Activated naive CD4-positive, alpha-beta T cell treated with anti-CD3 and anti-CD28 coated beads for 36 hours (primary cell): ENCODE measurements at regions of chr1 and their contacts with region 1.

Region 1: GRCh38 chr1:51569284-51570062 is 47.4 kb upstream of the OSBPL9 start:
- DNase-seq: peak; percentile 68
- H3K4me3 Mint-ChIP-seq: peak overlapping the region; percentile 13
- H3K27ac Mint-ChIP-seq: peak overlapping the region; percentile 91
- H3K4me1 Mint-ChIP-seq: peaks cover 31% of the 10 kb centered on the region
- H3K27me3 Mint-ChIP-seq: no peaks in the 10 kb centered on the region

Region 2: GRCh38 chr1:51541313-51542174 is 27.9 kb before region 1 on chr1:
- CTCF ChIA-PET with region 1: no interaction called
- intact Hi-C with region 1: loop called (anchors 1 kb)
- DNase-seq: peak; percentile 26
- H3K4me3 Mint-ChIP-seq: no peak overlapping the region
- H3K27ac Mint-ChIP-seq: no peak overlapping the region
- H3K4me1 Mint-ChIP-seq: peaks cover 17% of the 10 kb centered on the region
- H3K27me3 Mint-ChIP-seq: no peaks in the 10 kb centered on the region

Region 3: DNA sequence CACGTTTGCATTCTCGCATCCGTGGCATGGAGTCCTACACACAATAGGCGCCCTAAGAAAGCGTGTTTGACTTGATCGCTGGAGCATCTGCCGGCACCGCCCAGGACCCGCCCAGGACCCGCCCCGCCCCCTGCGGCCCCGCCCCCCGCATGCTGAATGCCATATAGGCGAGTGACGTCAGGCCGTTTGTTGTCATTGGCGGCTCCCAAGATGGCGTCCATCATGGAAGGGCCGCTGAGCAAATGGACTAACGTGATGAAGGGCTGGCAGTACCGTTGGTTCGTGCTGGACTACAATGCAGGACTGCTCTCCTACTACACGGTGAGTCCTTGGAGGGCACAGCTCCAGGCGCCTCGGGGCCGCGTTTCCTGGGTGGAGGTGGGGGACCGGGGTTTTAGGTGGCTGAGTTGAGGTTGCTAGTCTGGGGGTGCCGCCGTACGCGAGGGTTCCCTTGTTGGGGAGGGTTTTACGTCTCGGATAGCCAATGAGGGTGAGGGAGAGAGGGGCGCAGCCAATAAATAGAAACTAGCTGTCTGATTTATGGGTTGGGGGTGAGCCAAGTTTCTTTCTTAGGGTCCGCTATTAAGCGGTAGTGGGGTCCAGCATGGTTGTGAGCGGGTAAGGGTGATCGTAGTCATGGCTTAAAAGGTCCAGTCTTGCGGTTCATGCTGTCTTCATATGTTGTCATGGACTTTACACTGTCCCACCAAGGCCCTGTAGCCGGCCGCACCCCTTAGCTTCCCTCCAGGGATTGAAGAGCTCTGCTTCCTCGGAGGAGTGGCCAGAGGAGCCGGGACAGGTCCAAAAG is 47.6 kb after region 1 on chr1 and contains the start of gene OSBPL9:
- CTCF ChIA-PET with region 1: interaction called, 3 read pairs
- intact Hi-C with region 1: loop called (anchors 1 kb)
- DNase-seq: peak; percentile 94
- H3K4me3 Mint-ChIP-seq: peak within 1 kb of the TSS; percentile 98
- H3K27ac Mint-ChIP-seq: peak within 1 kb of the TSS; percentile 89
- H3K4me1 Mint-ChIP-seq: peaks cover 25% of the 10 kb centered on the region
- H3K27me3 Mint-ChIP-seq: no peaks in the 10 kb centered on the region
- total RNA-seq, gene OSBPL9: 38.2 to 40.7 TPM

Region 4: GRCh38 chr1:51729156-51729823 is 159.8 kb after region 1 on chr1:
- CTCF ChIA-PET with region 1: no interaction called
- intact Hi-C with region 1: loop called (anchors 1 kb)
- DNase-seq: peak; percentile 97
- H3K4me3 Mint-ChIP-seq: peak overlapping the region; percentile 87
- H3K27ac Mint-ChIP-seq: peak overlapping the region; percentile 87
- H3K4me1 Mint-ChIP-seq: peaks cover 33% of the 10 kb centered on the region
- H3K27me3 Mint-ChIP-seq: no peaks in the 10 kb centered on the region

Region 5: GRCh38 chr1:51750218-51750617 is 180.7 kb after region 1 on chr1:
- CTCF ChIA-PET with region 1: no interaction called
- intact Hi-C with region 1: no loop called
- DNase-seq: no peak
- H3K4me3 Mint-ChIP-seq: no peak overlapping the region
- H3K27ac Mint-ChIP-seq: no peak overlapping the region
- H3K4me1 Mint-ChIP-seq: no peaks in the 10 kb centered on the region
- H3K27me3 Mint-ChIP-seq: no peaks in the 10 kb centered on the region